IMR-90 (cell line): ENCODE measurements at regions of chr19 and their contacts with region 1.

Region 1: DNA sequence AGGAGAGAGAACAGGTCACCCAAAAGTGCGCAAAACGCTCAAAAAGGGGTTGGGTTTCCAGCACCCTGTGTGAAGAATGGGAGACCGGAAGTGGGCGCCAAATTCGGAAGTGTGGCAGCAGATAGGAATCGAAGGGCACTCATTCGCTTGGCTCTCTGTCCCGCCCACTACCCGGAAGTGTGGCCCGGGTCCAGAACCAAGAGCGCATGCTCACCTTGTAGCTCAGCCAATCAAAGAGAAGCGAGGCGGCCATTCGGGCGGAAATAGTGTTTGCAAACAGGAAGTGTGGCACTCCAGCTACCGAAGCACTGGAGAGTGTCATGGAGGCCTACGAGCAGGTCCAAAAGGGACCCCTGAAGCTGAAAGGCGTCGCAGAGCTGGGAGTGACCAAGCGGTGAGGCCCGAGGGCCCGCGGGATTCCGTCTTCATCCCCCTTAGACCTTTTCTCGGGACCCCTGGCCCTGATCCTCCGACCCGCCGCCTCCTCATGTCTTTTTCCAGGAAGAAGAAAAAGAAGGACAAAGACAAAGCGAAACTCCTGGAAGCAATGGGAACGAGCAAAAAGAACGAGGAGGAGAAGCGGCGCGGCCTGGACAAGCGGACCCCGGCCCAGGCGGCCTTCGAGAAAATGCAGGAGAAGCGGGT is at the start of gene FAM32A:
- DNase-seq: peak; percentile 99
- ATAC-seq: peak; percentile 86
- H3K4me3 ChIP-seq: peak within 1 kb of the TSS; percentile 65
- H3K27ac ChIP-seq: peak within 1 kb of the TSS; percentile 66
- H3K4me1 ChIP-seq: peaks cover 3% of the 10 kb centered on the region; the same call in 1 of the 2 replicates
- H3K27me3 ChIP-seq: no peaks in the 10 kb centered on the region
- CTCF ChIP-seq: peak; percentile 22; the same call in 1 of the 2 replicates
- POLR2A ChIP-seq: peak; percentile 92
- RAD21 ChIP-seq: no peak
- total RNA-seq, gene FAM32A: 99.2 and 99.5 TPM in 2 replicates

Region 2: DNA sequence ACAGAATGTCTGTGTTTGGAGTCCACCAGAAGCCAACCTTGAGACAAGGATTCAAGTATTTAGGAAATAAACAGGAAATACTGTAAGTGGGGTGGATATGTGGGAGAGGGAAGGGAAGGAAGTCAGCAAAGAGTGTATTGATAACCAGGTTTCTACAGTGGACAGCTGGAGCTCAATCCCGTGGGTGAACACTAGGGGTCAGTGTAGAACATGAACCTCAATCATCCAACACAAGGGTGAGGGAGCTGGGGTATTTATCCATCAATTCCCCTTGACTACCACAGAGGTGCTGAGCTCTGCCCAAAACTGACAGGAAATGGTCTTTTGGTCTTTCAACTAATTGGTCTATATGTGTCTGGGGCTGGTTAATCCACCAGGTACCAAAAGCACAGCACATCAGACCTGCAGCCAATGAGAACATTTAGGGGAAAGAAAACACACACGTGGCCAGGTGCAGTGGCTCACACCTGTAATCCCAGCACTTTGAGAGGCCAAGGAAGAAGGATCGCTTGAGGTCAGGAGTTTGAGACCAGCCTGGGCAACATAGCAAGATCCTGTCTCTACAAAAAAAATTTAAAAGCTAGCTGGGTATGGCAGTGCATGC is 1083.7 kb before region 1 on chr19:
- CTCF ChIA-PET with region 1: no interaction called
- POLR2A ChIA-PET with region 1: no interaction called
- dilution Hi-C with region 1: no loop called
- in situ Hi-C with region 1: loop called (anchors 25 kb)
- intact Hi-C with region 1: no loop called
- DNase-seq: peak; percentile 56
- ATAC-seq: peak; percentile 85
- H3K4me3 ChIP-seq: no peak overlapping the region
- H3K27ac ChIP-seq: no peak overlapping the region
- H3K4me1 ChIP-seq: peaks cover under 1% of the 10 kb centered on the region; the same call in 1 of the 2 replicates
- H3K27me3 ChIP-seq: peaks cover 3% of the 10 kb centered on the region
- CTCF ChIP-seq: peak; percentile 68
- POLR2A ChIP-seq: no peak
- RAD21 ChIP-seq: peak; percentile 68

Region 3: GRCh38 chr19:15418588-15419412 is 766.4 kb before region 1 on chr19 and contains the start of gene AKAP8L:
- CTCF ChIA-PET with region 1: no interaction called
- POLR2A ChIA-PET with region 1: no interaction called
- dilution Hi-C with region 1: no loop called
- in situ Hi-C with region 1: loop called (anchors 25 kb)
- intact Hi-C with region 1: no loop called
- DNase-seq: peak; percentile 100
- ATAC-seq: peak; percentile 95
- H3K4me3 ChIP-seq: peak within 1 kb of the TSS; percentile 69
- H3K27ac ChIP-seq: peak within 1 kb of the TSS; percentile 85
- H3K4me1 ChIP-seq: peaks cover 13% of the 10 kb centered on the region
- H3K27me3 ChIP-seq: no peaks in the 10 kb centered on the region
- CTCF ChIP-seq: peak; percentile 71
- POLR2A ChIP-seq: peak; percentile 90
- RAD21 ChIP-seq: peak; percentile 65
- total RNA-seq, gene AKAP8L: 40.8 and 44.6 TPM in 2 replicates

Region 4: GRCh38 chr19:15629003-15629880 is 556.0 kb before region 1 on chr19:
- CTCF ChIA-PET with region 1: no interaction called
- POLR2A ChIA-PET with region 1: no interaction called
- dilution Hi-C with region 1: no loop called
- in situ Hi-C with region 1: loop called (anchors 25 kb)
- intact Hi-C with region 1: no loop called
- DNase-seq: peak; percentile 19
- ATAC-seq: peak; percentile 92
- H3K4me3 ChIP-seq: no peak overlapping the region
- H3K27ac ChIP-seq: no peak overlapping the region
- H3K4me1 ChIP-seq: no peaks in the 10 kb centered on the region
- H3K27me3 ChIP-seq: no peaks in the 10 kb centered on the region
- CTCF ChIP-seq: peak; percentile 73
- POLR2A ChIP-seq: no peak
- RAD21 ChIP-seq: peak; percentile 75

Region 5: GRCh38 chr19:15836595-15837337 is 348.5 kb before region 1 on chr19:
- CTCF ChIA-PET with region 1: no interaction called
- POLR2A ChIA-PET with region 1: interaction called, 4 read pairs
- dilution Hi-C with region 1: no loop called
- in situ Hi-C with region 1: loop called (anchors 25 kb)
- intact Hi-C with region 1: no loop called
- DNase-seq: peak; percentile 88
- ATAC-seq: peak; percentile 100
- H3K4me3 ChIP-seq: peak overlapping the region; percentile 82
- H3K27ac ChIP-seq: peak overlapping the region; percentile 72
- H3K4me1 ChIP-seq: no peaks in the 10 kb centered on the region
- H3K27me3 ChIP-seq: no peaks in the 10 kb centered on the region
- CTCF ChIP-seq: 0 out of 2 replicates have a peak, but pooled peaks have one; percentile 0
- POLR2A ChIP-seq: peak; percentile 59; the same call in 1 of the 2 replicates
- RAD21 ChIP-seq: no peak

Region 6: DNA sequence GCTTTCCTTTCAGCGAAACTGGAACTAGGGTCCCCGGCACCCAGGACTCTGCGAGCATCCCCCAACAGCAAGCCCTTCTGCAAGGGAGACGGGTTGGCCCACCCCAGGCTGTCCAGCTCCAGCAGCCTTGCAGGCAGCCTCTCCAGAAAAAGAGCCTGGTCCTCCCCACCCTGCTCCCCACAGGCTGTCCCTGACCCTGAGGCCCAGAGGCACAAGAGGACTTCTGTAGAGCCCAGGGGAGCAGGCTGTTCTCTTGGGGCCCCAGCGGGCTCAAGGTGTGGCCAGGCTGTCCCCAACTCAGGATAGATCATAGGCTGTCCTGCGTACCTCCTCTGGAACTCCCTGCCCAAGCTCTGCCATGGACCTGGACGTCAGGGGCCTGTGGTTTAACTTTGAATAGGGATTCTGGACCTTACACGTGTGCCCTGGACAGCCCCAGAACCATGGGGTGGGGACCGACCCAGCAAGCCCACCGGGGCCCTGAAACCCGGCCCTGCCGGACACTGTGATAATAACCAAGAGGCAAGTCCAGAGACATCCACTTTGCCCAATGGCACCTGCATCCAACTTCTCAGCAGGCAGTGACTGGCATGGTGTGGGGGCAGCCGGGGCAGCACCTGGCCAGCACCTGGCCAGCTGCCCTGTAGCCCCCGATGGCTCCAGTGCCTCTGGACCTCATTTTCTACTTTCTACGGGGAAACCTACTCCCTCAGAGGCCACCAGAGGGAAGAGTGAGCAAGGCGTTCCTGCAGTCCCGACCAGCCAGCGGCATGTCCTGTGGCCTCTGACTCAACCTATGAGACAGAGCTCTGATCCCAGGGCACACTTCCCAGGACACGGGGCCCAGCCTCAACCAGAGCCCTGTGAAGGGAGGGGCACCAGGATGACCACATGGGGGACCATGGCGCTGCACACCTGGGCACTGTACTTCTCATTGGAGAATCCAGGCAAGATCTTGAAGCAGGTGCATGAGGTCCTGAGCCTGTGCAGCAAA is 159.8 kb before region 1 on chr19:
- CTCF ChIA-PET with region 1: no interaction called
- POLR2A ChIA-PET with region 1: interaction called, 3 read pairs
- dilution Hi-C with region 1: no loop called
- in situ Hi-C with region 1: no loop called
- intact Hi-C with region 1: loop called (anchors 1 kb)
- DNase-seq: peak; percentile 70
- ATAC-seq: peak; percentile 97
- H3K4me3 ChIP-seq: no peak overlapping the region
- H3K27ac ChIP-seq: no peak overlapping the region
- H3K4me1 ChIP-seq: no peaks in the 10 kb centered on the region
- H3K27me3 ChIP-seq: peaks cover 6% of the 10 kb centered on the region; the same call in 1 of the 2 replicates
- CTCF ChIP-seq: peak; percentile 62
- POLR2A ChIP-seq: no peak
- RAD21 ChIP-seq: peak; percentile 65

Region 7: DNA sequence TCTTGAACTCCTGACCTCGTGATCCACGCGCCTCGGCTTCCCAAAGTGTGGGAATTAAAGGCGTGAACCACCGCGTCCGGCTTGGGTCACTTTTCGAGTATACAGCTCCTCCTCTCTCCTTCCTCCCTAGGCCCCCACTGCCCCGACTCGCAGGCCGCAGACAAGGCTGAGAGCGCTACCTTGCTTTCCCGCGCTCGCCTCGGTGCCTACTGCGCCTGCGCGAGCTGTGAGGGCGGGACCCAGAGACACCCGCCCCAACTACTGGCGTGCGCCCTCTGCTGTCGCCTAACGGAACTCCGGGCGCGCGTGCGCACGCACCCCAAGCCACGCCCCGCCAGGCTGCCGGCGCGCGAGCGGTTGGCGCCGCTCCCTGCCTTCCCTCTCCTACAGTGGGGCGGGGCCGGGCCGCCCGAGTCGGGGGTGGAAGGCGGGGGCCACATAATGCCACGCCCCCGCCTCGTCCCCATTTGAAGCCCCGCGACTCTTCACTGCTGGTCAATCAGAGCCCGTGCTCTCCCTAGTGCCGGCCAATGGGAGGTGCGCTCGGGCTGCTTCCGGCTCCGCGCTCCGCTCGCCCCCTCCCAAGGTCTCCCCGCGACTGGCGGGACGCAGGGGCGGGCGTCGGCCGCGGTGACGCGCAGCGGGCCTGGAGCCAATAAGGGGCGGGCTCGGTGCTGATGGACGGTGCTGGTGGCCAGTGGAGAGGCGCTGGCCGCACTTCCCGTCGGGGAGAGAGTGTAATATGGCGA is 73.9 kb before region 1 on chr19 and contains the start of gene RAB8A:
- CTCF ChIA-PET with region 1: interaction called, 5 read pairs
- POLR2A ChIA-PET with region 1: no interaction called
- dilution Hi-C with region 1: no loop called
- in situ Hi-C with region 1: loop called (anchors 5 kb)
- intact Hi-C with region 1: loop called (anchors 2 kb)
- DNase-seq: peak; percentile 99
- ATAC-seq: peak; percentile 95
- H3K4me3 ChIP-seq: peak within 1 kb of the TSS; percentile 76
- H3K27ac ChIP-seq: peak within 1 kb of the TSS; percentile 76
- H3K4me1 ChIP-seq: peaks cover 7% of the 10 kb centered on the region
- H3K27me3 ChIP-seq: no peaks in the 10 kb centered on the region
- CTCF ChIP-seq: peak; percentile 98
- POLR2A ChIP-seq: no peak
- RAD21 ChIP-seq: peak; percentile 54
- total RNA-seq, gene RAB8A: 135 and 158 TPM in 2 replicates